WTC11 (cell line): ENCODE measurements at regions of chr12 and their contacts with region 1.

Region 1: DNA sequence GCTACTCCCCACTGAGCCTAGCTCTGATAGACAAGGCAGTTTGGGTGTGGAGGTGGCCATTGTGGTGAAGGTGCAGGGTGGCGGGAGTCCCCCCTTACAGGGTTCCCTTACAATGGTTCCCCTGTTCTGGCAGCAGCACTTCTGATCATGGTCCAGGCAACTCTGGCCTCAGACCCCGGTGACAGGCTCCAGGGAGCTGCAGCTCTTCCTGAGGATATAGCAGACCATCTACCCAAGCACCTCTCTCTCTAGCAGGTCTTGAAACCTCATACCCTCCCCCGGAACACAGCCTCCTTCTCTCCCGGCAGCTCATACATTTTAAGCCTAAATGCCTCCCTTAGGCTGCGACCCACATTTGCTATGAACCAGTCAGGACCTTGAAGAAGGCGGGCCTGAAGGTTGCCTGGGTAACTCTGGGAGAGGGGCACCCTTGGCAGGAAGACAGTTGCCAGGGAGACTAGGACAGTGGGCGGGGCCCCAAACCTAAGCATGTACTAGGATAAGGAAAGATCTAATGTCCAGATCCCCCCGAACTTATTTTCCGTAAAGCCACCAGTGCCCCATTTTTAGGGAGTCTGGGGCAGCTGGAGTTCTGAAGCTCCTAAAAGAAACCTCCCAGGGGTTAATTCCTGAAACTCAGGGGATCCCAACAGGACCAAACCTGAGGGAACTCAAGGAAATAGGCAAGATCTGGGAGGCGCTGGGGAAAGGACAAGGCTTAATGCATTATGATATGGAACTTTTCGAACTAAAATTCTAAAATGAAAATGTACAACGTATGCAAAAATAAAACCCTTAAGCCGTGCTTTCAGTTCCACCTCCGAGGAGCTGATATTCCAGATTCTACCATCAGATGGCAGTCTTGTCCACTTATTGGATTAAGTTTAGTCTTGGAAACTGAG is 4.5 kb upstream of the GDF11 start:
- DNase-seq: peak; percentile 90
- ATAC-seq: peak; percentile 77
- H3K4me3 Mint-ChIP-seq: peak overlapping the region; percentile 81
- H3K27ac Mint-ChIP-seq: peak overlapping the region; percentile 86
- H3K4me1 Mint-ChIP-seq: peaks cover 31% of the 10 kb centered on the region
- H3K27me3 Mint-ChIP-seq: peaks cover 2% of the 10 kb centered on the region; the same call in 1 of the 2 replicates
- CTCF ChIP-seq: peak; percentile 73

Region 2: GRCh38 chr12:55670276-55670675 is 68.1 kb before region 1 on chr12:
- CTCF ChIA-PET with region 1: interaction called, 17 read pairs
- POLR2A ChIA-PET with region 1: no interaction called
- DNase-seq: no peak
- ATAC-seq: no peak
- H3K4me3 Mint-ChIP-seq: no peak overlapping the region
- H3K27ac Mint-ChIP-seq: no peak overlapping the region
- H3K4me1 Mint-ChIP-seq: no peaks in the 10 kb centered on the region
- H3K27me3 Mint-ChIP-seq: peaks cover 14% of the 10 kb centered on the region
- CTCF ChIP-seq: no peak

Region 3: DNA sequence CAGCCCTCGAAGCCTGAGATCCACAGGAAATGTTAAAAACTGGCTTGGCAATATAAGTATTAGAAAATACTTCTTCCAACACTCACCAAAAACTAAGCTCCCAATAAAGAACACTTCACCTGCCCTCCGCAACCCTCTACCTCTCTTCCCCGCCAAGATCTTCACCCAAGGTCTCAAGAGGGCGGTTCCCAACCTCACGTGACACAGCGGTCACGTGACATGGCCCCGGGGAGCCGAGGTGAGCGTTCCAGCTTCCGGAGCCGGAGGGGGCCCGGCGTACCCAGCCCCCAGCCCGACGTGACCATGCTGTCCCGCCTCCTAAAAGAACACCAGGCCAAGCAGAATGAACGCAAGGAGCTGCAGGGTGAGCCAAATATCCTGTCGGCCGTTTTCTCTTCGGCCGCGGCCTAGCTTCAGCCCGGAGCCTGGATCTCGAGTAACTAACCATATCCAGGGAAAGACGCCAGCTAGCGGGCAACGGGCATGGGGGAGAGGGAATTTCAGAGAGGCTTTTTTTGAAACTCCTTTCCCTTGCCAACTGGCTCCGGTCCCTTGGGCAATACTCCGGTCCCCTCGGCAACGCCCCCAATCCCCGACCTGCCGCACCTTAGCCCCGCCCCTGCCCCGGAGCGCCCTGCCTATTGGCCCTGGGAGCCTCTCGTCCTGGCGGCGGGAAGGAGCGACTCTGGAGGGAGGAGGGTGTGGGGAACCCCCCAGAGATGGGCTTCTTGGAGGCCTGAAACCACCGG is 22.4 kb before region 1 on chr12 and contains the start of gene BLOC1S1:
- CTCF ChIA-PET with region 1: interaction called, 160 read pairs
- POLR2A ChIA-PET with region 1: no interaction called
- DNase-seq: peak; percentile 96
- ATAC-seq: peak; percentile 88
- H3K4me3 Mint-ChIP-seq: peak within 1 kb of the TSS; percentile 85
- H3K27ac Mint-ChIP-seq: peak within 1 kb of the TSS; percentile 84
- H3K4me1 Mint-ChIP-seq: peaks cover 37% of the 10 kb centered on the region
- H3K27me3 Mint-ChIP-seq: peaks cover 24% of the 10 kb centered on the region
- CTCF ChIP-seq: no peak
- total RNA-seq, gene BLOC1S1: 81.9 to 97.1 TPM (median 95.1 TPM) in 3 replicates

Region 4: DNA sequence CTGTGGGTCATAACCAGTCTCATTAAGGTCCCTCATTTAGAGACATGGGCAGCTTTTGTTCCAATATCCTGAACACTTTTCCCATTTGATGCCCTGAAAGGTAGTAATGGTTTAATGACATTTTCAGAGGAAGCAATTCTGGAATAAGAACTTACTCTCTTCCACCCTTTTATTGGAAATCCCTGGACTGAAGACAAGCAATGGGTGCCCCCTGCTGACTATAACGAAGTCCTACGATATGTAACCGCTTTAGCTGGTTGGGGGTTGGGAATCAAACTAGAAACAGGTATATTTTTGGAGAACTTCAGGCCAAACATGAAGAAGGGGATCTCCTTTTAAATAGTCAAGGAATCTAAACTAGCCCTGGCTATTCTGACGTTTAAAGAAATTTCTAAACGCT is 58.7 kb after region 1 on chr12:
- CTCF ChIA-PET with region 1: interaction called, 26 read pairs
- POLR2A ChIA-PET with region 1: interaction called, 7 read pairs
- DNase-seq: peak; percentile 36
- ATAC-seq: no peak; the same call in 1 of the 2 replicates
- H3K4me3 Mint-ChIP-seq: no peak overlapping the region
- H3K27ac Mint-ChIP-seq: peak overlapping the region; percentile 81; the same call in 1 of the 2 replicates
- H3K4me1 Mint-ChIP-seq: peaks cover 8% of the 10 kb centered on the region
- H3K27me3 Mint-ChIP-seq: no peaks in the 10 kb centered on the region
- CTCF ChIP-seq: peak; percentile 27; the same call in 1 of the 2 replicates

Region 5: DNA sequence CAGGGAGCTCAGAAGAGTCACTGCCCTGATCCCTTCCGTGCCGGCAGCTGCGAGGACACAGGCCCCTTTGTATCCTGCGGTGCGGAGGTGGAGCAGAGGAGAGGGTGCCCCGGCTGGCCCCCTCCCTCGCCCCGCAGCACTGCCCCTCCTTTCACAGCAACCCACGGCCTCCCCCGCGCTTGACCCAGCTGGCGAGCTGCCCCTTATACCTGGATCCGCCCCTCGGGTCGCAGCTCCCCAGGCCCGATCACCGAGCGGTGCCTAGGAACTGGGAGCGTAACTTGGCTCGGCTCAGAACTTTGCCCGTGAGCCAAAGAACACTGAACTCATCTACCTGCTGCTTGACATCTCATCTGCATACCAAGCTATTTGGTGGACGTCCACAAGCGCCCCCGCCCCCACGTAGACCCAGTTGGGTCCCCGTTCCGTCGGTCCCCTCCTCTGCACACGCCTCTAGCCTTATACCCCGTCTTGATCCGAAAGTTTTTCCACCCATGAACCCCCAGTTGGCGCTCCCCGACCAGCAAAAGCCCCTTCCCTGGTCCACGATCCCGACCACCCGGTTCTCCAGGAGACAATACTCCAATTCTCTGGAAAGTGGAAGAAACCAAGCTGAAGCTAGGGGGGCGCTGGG is 91.7 kb after region 1 on chr12:
- CTCF ChIA-PET with region 1: interaction called, 58 read pairs
- POLR2A ChIA-PET with region 1: interaction called, 7 read pairs
- DNase-seq: peak; percentile 47
- ATAC-seq: peak; percentile 1
- H3K4me3 Mint-ChIP-seq: peak overlapping the region; percentile 97
- H3K27ac Mint-ChIP-seq: peak overlapping the region; percentile 99
- H3K4me1 Mint-ChIP-seq: peaks cover 35% of the 10 kb centered on the region
- H3K27me3 Mint-ChIP-seq: no peaks in the 10 kb centered on the region
- CTCF ChIP-seq: no peak

Region 6: GRCh38 chr12:55973598-55974307 is 235.4 kb after region 1 on chr12 and contains the start of gene RAB5B:
- CTCF ChIA-PET with region 1: interaction called, 32 read pairs
- POLR2A ChIA-PET with region 1: interaction called, 5 read pairs
- DNase-seq: peak; percentile 99
- ATAC-seq: peak; percentile 91
- H3K4me3 Mint-ChIP-seq: no peak within 1 kb of the TSS
- H3K27ac Mint-ChIP-seq: no peak within 1 kb of the TSS
- H3K4me1 Mint-ChIP-seq: no peaks in the 10 kb centered on the region; the same call in 1 of the 2 replicates
- H3K27me3 Mint-ChIP-seq: no peaks in the 10 kb centered on the region
- CTCF ChIP-seq: no peak
- total RNA-seq, gene RAB5B: 55.0 to 65.8 TPM (median 64.3 TPM) in 3 replicates